ENCODE measurements at regions of chr12 and their contacts with region 1.

Region 1: DNA sequence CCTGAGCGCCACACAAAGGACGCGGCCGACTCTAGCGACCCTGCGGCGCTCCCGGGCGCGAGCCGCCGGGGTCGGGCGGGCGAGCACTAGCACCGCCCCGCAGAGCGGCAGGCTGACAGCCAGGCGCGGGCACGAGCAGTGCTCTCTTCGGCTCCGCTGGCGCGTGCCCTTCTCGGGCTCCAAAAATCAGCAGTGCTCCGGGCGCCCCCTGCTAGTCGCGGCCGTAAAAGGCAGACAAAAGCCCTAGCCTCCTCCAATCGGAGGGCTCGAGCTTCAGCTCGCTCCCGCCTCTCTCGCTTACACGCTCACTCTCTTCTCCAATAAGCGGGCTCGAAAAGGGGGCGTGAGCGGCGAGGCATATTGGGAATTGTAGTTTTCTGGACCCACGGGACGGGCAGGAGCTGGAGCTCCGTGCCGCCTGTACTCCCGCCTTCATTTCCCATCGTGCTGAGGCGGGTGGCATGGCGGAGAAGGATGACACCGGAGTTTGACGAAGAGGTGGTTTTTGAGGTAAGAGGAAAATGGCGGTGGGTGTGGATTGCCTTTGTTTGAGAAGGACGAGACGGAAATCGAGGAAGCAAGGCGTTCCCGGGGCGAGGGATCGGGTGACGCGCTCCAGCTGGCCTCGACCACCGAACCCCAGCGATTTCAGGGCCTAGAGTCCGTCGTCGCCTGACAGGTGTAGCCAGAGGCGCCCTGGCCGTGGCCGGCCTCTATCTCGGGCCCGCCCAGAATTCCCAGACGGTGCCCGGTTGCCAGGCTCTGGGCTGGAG is at the starts of genes FGD6 and VEZT:
- DNase-seq: peak; percentile 99
- ATAC-seq: peak; percentile 92 to 95 (median 94)
- H3K4me3 ChIP-seq: peak within 1 kb of the TSS; percentile 88
- H3K27ac ChIP-seq: peak within 1 kb of the TSS; percentile 91
- H3K4me1 ChIP-seq: peaks cover 41% of the 10 kb centered on the region
- H3K27me3 ChIP-seq: no peaks in the 10 kb centered on the region
- CTCF ChIP-seq: peak; percentile 57
- total RNA-seq, gene FGD6: 2.5 to 7.1 (median 4.4) TPM
- total RNA-seq, gene VEZT: 74.4 to 121 (median 95.3) TPM

Region 2: DNA sequence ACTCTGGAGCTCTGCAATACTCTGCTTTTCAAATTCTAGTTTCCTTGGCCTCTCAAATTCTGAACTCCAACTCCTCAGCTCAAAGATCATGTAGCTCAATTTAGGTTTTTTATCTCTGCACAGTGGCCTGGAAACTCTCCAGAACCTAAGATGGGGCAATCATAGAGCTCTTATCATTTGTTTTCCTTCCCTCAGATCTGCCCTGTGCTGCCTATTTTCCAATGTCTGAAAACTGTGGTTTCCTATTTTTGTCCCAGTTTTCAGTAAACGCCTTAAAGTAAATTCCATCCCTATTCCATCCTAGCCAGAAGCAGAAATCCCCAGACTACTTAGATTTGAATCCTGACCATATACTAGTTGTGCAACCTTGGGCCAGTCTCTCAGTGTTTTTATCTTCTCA is 831.1 kb before region 1 on chr12:
- intact Hi-C with region 1: no loop called
- DNase-seq: no peak
- ATAC-seq: no peak
- H3K4me3 ChIP-seq: no peak overlapping the region
- H3K27ac ChIP-seq: no peak overlapping the region
- H3K4me1 ChIP-seq: no peaks in the 10 kb centered on the region
- H3K27me3 ChIP-seq: no peaks in the 10 kb centered on the region
- CTCF ChIP-seq: no peak

Region 3: GRCh38 chr12:95072900-95073697 is 144.5 kb before region 1 on chr12 and contains the start of gene NR2C1:
- intact Hi-C with region 1: loop called in 1 of 2 experiments (anchors 5 kb)
- DNase-seq: peak; percentile 94 to 97
- ATAC-seq: peak; percentile 96 to 98 (median 98)
- H3K4me3 ChIP-seq: peak within 1 kb of the TSS; percentile 99
- H3K27ac ChIP-seq: peak within 1 kb of the TSS; percentile 94
- H3K4me1 ChIP-seq: no peaks in the 10 kb centered on the region
- H3K27me3 ChIP-seq: no peaks in the 10 kb centered on the region
- CTCF ChIP-seq: no peak
- total RNA-seq, gene NR2C1: 19.9 to 32.3 (median 29.3) TPM

Measured in psoas muscle (tissue), 8 donors.